Transverse colon (tissue), 4 donors: ENCODE measurements at regions of chr18 and their contacts with region 1.

Region 1: GRCh38 chr18:35303610-35304009 is 13.6 kb upstream of the ZSCAN30 start:
- DNase-seq: no peak
- H3K4me3 ChIP-seq: no peak overlapping the region
- H3K27ac ChIP-seq: no peak overlapping the region
- H3K4me1 ChIP-seq: no peaks in the 10 kb centered on the region
- H3K27me3 ChIP-seq: no peaks in the 10 kb centered on the region
- CTCF ChIP-seq: no peak
- EP300 ChIP-seq: no peak
- POLR2A ChIP-seq: no peak

Region 2: GRCh38 chr18:35361570-35362321 is 58.1 kb after region 1 on chr18:
- in situ Hi-C with region 1: no loop called
- intact Hi-C with region 1: loop called (anchors 2 kb)
- DNase-seq: no peak
- H3K4me3 ChIP-seq: no peak overlapping the region
- H3K27ac ChIP-seq: no peak overlapping the region
- H3K4me1 ChIP-seq: no peaks in the 10 kb centered on the region
- H3K27me3 ChIP-seq: no peaks in the 10 kb centered on the region
- CTCF ChIP-seq: no peak
- EP300 ChIP-seq: no peak
- POLR2A ChIP-seq: no peak

Region 3: DNA sequence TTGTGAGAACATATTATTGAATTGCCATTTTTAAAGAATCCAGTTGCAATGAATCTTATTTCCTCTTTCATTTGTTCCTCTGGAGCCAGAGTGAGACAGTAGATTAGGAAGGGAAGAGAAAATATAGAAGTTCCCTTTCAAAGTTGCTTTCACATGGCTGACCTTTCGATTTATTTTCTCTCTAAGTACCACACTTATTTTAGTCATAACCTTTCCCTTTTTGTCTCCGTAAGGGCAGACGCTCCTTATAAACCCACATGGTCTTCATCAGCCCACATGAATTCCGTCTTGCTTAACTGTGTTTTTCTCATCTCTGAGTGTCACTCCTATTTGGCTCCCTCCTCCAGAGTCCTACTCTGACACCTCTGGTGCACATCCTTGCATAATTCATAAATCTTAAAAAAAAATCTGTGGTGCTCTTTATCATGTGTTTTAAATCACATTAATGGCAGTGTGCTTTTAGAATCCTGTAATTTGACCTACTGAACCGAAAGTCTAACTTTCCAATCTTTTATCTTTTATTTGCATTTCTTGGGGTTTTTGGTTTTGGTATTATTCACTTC is 112.0 kb after region 1 on chr18:
- in situ Hi-C with region 1: no loop called
- intact Hi-C with region 1: no loop called
- DNase-seq: no peak
- H3K4me3 ChIP-seq: no peak overlapping the region
- H3K27ac ChIP-seq: no peak overlapping the region
- H3K4me1 ChIP-seq: peaks cover 0 to 14% (median 6%) of the 10 kb centered on the region in 4 donors
- H3K27me3 ChIP-seq: no peaks in the 10 kb centered on the region
- CTCF ChIP-seq: no peak
- EP300 ChIP-seq: no peak
- POLR2A ChIP-seq: no peak